ENCODE measurements at regions of chr10 and their contacts with region 1.

Region 1: GRCh38 chr10:9302120-9302746 is 1247.7 kb downstream of the GATA3 start:
- DNase-seq: peak; percentile 8 to 52 (median 46)
- ATAC-seq: peak; percentile 58; the same call in 1 of the 3 replicates
- H3K4me3 ChIP-seq: no peak overlapping the region
- H3K27ac ChIP-seq: no peak overlapping the region
- H3K4me1 ChIP-seq: no peaks in the 10 kb centered on the region
- H3K27me3 ChIP-seq: no peaks in the 10 kb centered on the region
- CTCF ChIP-seq: peak; percentile 16 to 57 (median 19); a peak in 3 of 6 replicates
- EP300 ChIP-seq: no peak
- POLR2A ChIP-seq: no peak
- RAD21 ChIP-seq: peak; percentile 61 to 68

Region 2: DNA sequence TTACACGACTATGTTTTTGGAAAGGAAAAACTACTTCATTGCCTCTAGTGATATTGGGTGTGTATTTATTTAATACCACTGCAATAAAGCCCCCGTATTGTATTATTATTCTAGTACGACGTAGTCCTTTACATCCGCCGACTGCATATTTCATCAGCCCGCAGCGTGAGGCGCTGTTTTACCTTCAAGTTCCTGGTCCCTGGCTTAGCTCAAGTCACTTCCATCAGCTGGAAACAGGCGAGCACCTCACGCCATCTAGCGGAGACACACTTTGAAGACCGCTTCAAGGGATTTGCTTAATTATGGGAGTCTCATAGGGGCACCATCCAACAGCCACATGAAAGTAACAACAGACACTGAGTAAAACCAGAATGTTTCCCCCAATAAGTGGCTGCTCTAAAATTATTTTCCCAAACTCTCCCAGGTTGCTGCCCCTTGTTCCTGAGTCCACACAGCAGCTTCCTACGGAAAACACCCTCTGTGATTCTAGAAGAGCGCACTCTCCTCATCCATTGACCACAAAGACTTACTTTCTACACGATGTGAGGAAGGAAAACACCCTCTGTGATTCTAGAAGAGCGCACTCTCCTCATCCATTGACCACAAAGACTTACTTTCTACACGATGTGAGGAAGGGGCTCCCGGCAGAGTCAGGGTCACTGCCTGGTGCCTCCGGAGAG is 1614.9 kb before region 1 on chr10:
- CTCF ChIA-PET with region 1: no interaction called
- POLR2A ChIA-PET with region 1: no interaction called
- in situ Hi-C with region 1: no loop called
- intact Hi-C with region 1: loop called (anchors 5 kb)
- DNase-seq: peak; percentile 67 to 89 (median 72)
- ATAC-seq: peak; percentile 100
- H3K4me3 ChIP-seq: no peak overlapping the region
- H3K27ac ChIP-seq: no peak overlapping the region
- H3K4me1 ChIP-seq: no peaks in the 10 kb centered on the region
- H3K27me3 ChIP-seq: no peaks in the 10 kb centered on the region
- CTCF ChIP-seq: peak; percentile 96 to 99 (median 99)
- EP300 ChIP-seq: peak; percentile 7; the same call in 1 of the 2 replicates
- POLR2A ChIP-seq: no peak
- RAD21 ChIP-seq: peak; percentile 88 to 92

Region 3: DNA sequence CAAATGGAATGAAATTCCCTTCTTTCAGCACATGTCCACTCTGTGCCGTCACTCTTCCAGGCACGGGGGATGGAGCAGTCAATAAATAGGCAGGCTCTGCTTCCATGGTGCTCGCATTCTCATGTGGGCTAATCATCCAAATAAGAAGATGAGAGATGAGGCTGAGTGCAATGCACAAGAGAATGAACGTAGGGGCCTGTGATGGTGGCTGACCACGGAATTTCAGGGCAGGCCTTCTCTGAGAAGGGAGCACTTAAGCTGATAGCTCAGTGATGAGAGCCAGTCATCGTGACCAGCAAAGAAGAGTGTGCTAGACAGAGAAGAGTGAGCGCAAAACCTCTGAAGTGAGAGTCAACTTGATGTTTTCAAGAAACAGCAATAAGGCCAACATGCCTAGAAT is 1436.1 kb before region 1 on chr10:
- CTCF ChIA-PET with region 1: interaction called, 13 read pairs
- POLR2A ChIA-PET with region 1: no interaction called
- in situ Hi-C with region 1: loop called (anchors 10 kb)
- intact Hi-C with region 1: no loop called
- DNase-seq: no peak
- ATAC-seq: no peak
- H3K4me3 ChIP-seq: no peak overlapping the region
- H3K27ac ChIP-seq: no peak overlapping the region
- H3K4me1 ChIP-seq: no peaks in the 10 kb centered on the region; a peak in 1 of 5 replicates
- H3K27me3 ChIP-seq: no peaks in the 10 kb centered on the region
- CTCF ChIP-seq: no peak
- EP300 ChIP-seq: no peak
- POLR2A ChIP-seq: no peak
- RAD21 ChIP-seq: no peak

Region 4: DNA sequence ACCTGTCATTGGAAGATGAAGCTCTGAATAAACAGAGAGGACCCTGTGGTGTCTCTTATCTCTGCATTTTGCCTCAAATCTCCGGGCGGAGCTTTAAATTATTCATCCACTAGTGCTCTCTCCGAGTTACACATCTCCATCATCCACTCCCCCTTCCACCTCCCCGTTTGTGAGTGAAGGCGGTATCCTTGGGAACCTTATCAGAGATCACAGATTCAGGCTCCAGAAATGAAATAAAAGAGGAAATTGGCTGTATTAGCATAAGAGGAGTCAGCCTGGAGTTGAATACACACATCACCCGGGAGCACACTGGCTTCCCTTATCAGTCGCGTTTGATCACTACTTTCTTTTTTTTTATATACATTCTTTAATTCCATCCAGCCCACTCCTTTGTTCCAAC is 62.9 kb before region 1 on chr10:
- CTCF ChIA-PET with region 1: no interaction called
- POLR2A ChIA-PET with region 1: no interaction called
- in situ Hi-C with region 1: no loop called
- intact Hi-C with region 1: no loop called
- DNase-seq: no peak
- ATAC-seq: no peak
- H3K4me3 ChIP-seq: no peak overlapping the region
- H3K27ac ChIP-seq: no peak overlapping the region
- H3K4me1 ChIP-seq: no peaks in the 10 kb centered on the region
- H3K27me3 ChIP-seq: no peaks in the 10 kb centered on the region
- CTCF ChIP-seq: no peak
- EP300 ChIP-seq: no peak
- POLR2A ChIP-seq: no peak
- RAD21 ChIP-seq: no peak

Region 5: DNA sequence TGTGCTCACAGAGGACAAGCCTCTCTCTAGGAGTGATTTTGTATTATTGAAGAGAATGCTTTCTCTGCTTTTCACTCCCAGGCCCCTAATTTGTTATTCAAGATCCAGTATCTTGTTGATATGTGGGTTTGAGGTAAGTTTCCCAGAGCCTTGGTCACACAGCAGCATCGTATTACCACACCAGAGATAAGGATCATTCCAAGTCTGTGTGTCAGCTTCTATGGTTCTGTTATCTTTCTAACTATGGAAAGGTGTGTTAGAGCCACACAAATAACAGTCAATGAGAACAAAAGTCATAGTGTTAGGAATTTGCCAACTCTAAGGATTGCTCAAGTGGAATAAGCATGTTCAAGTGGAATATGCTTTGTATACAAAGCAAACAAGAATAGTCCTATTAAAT is 39.5 kb before region 1 on chr10:
- CTCF ChIA-PET with region 1: no interaction called
- POLR2A ChIA-PET with region 1: no interaction called
- in situ Hi-C with region 1: no loop called
- intact Hi-C with region 1: no loop called
- DNase-seq: no peak
- ATAC-seq: no peak
- H3K4me3 ChIP-seq: no peak overlapping the region
- H3K27ac ChIP-seq: no peak overlapping the region
- H3K4me1 ChIP-seq: no peaks in the 10 kb centered on the region
- H3K27me3 ChIP-seq: no peaks in the 10 kb centered on the region
- CTCF ChIP-seq: no peak
- EP300 ChIP-seq: no peak
- POLR2A ChIP-seq: no peak
- RAD21 ChIP-seq: no peak

Measured in K562 (cell line).